Activated CD8-positive, alpha-beta T cell treated with anti-CD3 and anti-CD28 coated beads, Interleukin-2, amount 10 ng/mL, durations not matched to agents 7 days and 5 days (primary cell): ENCODE measurements at regions of chr2 and their contacts with region 1.

Region 1: DNA sequence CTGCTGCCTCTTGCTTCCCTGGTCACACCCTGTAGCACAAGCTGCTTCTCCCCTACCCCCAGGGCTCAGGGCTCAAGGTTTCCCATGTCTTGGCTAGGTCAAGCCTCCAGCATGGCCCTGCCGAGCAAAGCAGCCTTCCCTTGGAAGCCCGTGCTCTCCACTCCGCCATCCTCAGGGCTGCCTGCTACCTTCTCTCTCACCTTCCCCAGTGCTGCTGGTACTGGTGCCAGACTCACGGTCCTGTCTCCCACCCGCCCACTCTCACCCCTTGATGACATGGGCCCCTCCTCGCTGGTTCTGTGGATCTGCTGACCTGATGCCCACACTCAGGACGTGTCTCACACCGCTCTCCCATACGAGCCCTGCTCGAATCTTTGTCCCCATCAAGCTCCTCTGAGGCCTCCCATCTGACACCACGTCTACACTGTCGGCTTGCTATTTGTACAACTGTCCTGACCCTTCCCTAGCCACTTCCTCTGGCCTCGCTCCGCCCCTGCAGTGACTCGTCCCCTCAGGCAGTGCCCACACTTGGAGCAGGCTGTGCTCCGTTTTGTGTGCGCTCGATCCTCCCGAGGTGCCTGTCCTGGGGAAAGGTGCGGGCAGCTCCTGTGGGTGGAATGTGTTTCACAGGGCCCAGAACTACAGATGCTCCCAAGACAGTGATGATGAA is 49.9 kb downstream of the ZAP70 start:
- DNase-seq: no peak
- ATAC-seq: no peak
- H3K4me3 Mint-ChIP-seq: no peak overlapping the region
- H3K27ac Mint-ChIP-seq: peak overlapping the region; percentile 56
- H3K4me1 Mint-ChIP-seq: peaks cover 40% of the 10 kb centered on the region
- H3K27me3 Mint-ChIP-seq: no peaks in the 10 kb centered on the region

Region 2: DNA sequence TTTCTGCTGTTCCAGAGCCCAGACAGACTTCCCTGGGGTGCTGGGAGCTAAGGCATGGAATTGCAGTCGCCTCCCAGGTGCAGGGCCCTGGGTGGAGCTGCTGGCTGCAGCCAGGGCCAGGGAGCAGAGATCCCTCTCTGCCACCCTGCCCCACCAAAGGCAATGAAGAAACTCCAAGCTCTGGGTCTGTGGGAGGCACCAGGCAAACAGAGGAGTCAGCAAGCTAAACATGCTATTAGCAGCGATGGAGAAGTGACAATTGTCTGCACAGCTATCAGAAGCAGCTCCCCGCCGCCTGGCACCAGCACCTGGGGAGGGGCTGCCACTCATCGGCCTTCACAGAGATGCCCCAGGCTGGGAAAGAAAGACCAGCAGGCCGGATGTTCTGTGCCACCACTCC is 145.4 kb before region 1 on chr2:
- CTCF ChIA-PET with region 1: no interaction called
- POLR2A ChIA-PET with region 1: no interaction called
- DNase-seq: no peak
- ATAC-seq: no peak
- H3K4me3 Mint-ChIP-seq: no peak overlapping the region
- H3K27ac Mint-ChIP-seq: no peak overlapping the region
- H3K4me1 Mint-ChIP-seq: no peaks in the 10 kb centered on the region
- H3K27me3 Mint-ChIP-seq: no peaks in the 10 kb centered on the region

Region 3: DNA sequence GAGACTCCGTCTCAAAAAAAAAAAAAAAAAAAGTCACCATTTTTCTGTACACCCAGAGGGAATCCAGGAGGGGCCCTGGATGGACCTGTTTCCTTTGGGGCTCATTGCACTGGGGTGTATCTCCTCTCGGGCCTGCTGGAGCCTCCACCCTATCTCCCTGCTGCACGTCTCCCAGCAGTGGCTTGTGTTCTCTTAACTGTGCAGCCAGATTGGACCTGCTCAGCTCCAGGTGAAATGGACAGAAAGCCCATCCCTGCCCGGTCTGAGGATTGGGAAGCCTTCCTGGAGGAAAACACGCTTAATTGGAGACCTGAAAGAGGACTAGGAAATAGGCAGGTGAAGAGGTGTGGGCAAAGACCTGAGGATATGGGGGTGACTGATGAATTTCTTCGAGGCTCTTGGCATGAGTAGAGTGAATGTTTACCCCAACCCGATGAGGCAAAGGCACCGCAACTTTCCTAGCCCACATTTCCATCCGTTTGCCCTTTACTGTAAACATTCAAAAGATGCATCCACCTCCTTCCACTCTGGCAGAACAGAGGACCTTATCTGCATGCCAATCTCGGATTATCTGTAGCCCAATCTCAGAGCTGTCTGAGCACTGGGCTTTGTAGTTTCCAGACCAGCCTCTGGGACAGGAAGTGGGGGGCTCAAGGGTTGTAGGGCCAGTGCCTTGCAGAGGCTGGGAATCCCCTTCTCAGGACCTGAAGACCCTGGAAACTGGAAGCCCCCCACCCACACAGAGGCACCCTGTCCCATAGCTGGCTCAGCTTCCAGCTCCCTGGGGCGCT is 52.5 kb before region 1 on chr2:
- CTCF ChIA-PET with region 1: interaction called, 12 read pairs
- POLR2A ChIA-PET with region 1: interaction called, 4 read pairs
- DNase-seq: no peak
- ATAC-seq: no peak
- H3K4me3 Mint-ChIP-seq: no peak overlapping the region
- H3K27ac Mint-ChIP-seq: peak overlapping the region; percentile 46
- H3K4me1 Mint-ChIP-seq: peaks cover 48% of the 10 kb centered on the region
- H3K27me3 Mint-ChIP-seq: no peaks in the 10 kb centered on the region